Gastrocnemius medialis (tissue), 4 donors: ENCODE measurements at regions of chrX and their contacts with region 1.

Region 1: DNA sequence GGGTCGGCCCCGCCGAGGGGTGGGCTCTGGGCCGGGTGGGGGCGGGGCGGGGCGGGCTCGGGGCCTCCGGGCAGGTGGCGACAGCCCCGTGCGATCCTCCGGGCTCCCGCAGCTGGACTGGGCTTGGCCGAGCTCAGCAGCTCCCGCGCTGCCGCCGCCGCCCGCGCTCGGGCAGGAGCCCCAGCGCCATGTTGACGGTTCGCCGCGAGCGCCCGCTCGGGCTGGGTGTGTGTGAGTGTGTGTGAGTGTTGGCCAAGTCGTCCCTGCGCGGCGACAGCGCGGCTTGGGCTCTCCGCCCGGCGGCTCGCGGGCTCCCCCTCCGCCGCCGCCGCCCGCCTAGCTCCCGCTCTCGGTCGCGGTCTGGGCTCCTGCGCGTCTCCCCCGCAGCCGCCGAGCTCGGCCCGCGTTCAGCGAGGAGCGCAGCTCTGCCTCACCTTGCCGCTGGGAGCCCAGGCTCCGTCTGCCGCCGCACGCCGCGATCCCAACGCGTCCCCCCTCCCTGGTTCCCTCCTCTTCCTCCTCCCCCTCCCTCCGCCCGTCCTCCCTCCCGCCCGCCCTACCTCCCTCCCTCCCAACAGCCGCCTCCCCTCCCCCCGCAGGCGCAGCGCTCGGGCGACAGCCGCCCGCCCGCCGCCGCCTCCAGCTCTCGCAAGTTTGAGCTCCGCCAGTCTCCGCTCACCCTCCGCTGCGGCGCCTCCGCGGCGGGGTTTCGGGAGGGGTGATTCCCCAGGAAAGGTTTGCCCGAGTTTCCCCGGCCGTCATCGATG is at the start of gene BCOR:
- DNase-seq: peak; percentile 61 to 71
- ATAC-seq: peak; percentile 50 to 51
- H3K4me3 ChIP-seq: peak within 1 kb of the TSS; percentile 64 to 94 (median 82)
- H3K27ac ChIP-seq: peak within 1 kb of the TSS; percentile 88 to 93 (median 91)
- H3K4me1 ChIP-seq: peaks cover 3 to 13% of the 10 kb centered on the region in 2 donors
- H3K27me3 ChIP-seq: peaks cover 0 to 27% (median 16%) of the 10 kb centered on the region in 3 donors
- CTCF ChIP-seq: no peak
- POLR2A ChIP-seq: peak; percentile 85 to 88
- total RNA-seq, gene BCOR: 6.5 to 43.8 (median 18.4) TPM

Region 2: GRCh38 chrX:39814391-39814790 is 283.3 kb before region 1 on chrX:
- in situ Hi-C with region 1: no loop called
- intact Hi-C with region 1: loop called (anchors 10 kb)
- DNase-seq: no peak
- ATAC-seq: peak; percentile 25 to 40
- H3K4me3 ChIP-seq: no peak overlapping the region
- H3K27ac ChIP-seq: peak overlapping the region; percentile 52 to 74 (median 71)
- H3K4me1 ChIP-seq: peaks cover 5 to 6% of the 10 kb centered on the region in 2 donors
- H3K27me3 ChIP-seq: peaks cover 0 to 3% (median 0%) of the 10 kb centered on the region in 3 donors
- CTCF ChIP-seq: peak; percentile 23 to 55 (median 40)
- POLR2A ChIP-seq: no peak

Region 3: DNA sequence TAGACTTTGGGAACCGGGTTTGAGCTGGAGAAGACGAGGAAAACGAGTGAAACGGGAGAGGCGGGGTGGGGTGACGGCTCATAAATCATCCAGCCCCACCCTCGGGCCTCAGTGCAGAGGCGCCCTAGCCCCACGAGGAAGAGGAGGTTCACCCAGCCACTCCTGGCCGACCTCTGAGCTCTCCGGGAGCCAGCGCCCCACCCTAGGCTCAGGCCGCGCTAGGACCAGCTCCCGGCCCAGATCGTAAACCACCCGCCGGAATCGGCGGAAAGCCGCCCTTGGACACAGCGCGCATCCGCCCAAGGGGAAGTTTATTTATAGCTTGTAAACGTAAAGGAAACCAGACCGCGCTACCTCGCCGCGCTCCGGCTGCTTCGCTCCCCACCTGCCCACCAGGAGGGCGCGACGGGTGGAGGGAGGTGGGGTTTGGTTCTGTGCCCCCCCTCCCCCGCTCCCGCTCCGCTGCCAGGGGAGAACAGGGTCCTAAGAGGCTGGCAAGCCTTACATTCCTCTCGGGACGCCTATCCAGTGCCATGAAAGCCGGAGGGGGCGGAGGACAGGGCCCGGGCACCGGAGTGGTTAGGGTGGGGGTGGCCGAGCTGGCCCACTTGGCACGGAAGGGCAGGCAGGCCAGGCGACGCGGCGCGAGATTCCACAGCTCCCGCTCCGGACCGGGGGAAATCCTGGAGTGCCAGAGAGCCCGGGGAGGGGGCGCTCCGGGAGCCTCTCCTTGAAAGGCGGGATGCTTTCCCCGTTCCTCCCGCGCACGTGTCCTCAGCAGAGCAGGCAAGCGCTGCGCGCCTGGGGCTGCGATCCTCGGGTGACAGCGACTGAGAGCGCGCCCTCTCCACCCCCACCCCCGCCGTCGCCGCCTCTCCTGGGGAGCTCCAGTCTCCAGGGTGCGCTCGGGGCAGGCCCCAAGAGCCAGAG is 84.1 kb before region 1 on chrX:
- in situ Hi-C with region 1: no loop called
- intact Hi-C with region 1: loop called (anchors 2 kb)
- DNase-seq: peak; percentile 49 to 67
- ATAC-seq: peak; percentile 59 to 60
- H3K4me3 ChIP-seq: peak overlapping the region; percentile 61 to 79 (median 70)
- H3K27ac ChIP-seq: peak overlapping the region; percentile 92 to 95 (median 94)
- H3K4me1 ChIP-seq: peaks cover 0 to 7% of the 10 kb centered on the region in 2 donors
- H3K27me3 ChIP-seq: peaks cover 0 to 8% (median 7%) of the 10 kb centered on the region in 3 donors
- CTCF ChIP-seq: no peak
- POLR2A ChIP-seq: peak; percentile 69 to 77

Region 4: DNA sequence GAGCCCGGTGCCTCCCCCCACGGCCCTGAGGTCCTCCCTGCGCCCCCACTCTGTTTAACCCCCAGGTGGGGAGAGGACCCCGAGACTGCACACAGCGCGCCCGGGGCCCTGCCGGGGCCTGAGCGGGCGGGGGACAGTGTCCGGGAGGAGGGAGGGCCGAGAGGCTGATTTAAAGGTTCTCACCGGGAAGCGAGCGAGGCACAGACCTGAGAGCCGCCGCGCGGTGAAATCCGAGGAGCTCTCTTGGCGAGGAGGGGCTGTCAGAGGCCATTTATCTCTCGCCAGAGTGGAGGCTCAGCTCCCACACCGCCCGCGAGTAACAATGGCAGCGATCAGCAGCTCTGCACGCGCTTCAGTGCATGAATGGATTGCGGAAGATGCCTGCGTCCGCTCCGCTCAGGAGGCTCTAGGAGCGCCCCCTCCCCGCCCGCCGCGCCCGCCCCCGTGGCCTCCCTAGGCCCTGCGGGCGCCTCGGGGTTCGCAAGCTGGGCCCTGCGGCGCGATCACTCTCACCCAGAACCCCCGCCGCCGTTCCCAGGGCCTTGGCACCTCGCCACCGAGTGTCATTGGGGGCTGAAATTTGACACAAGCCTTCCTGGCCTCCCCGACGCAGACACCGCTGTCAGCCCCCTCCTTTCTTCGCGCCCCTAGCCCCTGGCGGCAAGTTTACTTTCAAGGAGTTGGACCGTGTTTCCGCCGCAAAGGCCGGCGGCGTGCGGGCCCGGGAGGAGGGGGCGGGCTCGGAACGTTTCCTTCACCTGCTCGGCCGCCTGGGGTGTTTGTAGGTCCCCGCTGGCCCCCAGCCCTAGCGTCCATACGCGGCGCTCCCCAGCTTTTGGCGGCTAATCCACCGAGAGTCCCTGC is 48.8 kb after region 1 on chrX:
- in situ Hi-C with region 1: loop called in 1 of 4 experiments (anchors 10 kb)
- intact Hi-C with region 1: no loop called
- DNase-seq: peak in 1 of 2 donors; percentile 39
- ATAC-seq: peak; percentile 80 to 85
- H3K4me3 ChIP-seq: peak overlapping the region; percentile 55 to 66 (median 58)
- H3K27ac ChIP-seq: peak overlapping the region; percentile 43 to 65 (median 54)
- H3K4me1 ChIP-seq: peaks cover 0 to 11% of the 10 kb centered on the region in 2 donors
- H3K27me3 ChIP-seq: peaks cover 0 to 24% (median 23%) of the 10 kb centered on the region in 3 donors
- CTCF ChIP-seq: no peak
- POLR2A ChIP-seq: peak; percentile 38 to 60

Region 5: DNA sequence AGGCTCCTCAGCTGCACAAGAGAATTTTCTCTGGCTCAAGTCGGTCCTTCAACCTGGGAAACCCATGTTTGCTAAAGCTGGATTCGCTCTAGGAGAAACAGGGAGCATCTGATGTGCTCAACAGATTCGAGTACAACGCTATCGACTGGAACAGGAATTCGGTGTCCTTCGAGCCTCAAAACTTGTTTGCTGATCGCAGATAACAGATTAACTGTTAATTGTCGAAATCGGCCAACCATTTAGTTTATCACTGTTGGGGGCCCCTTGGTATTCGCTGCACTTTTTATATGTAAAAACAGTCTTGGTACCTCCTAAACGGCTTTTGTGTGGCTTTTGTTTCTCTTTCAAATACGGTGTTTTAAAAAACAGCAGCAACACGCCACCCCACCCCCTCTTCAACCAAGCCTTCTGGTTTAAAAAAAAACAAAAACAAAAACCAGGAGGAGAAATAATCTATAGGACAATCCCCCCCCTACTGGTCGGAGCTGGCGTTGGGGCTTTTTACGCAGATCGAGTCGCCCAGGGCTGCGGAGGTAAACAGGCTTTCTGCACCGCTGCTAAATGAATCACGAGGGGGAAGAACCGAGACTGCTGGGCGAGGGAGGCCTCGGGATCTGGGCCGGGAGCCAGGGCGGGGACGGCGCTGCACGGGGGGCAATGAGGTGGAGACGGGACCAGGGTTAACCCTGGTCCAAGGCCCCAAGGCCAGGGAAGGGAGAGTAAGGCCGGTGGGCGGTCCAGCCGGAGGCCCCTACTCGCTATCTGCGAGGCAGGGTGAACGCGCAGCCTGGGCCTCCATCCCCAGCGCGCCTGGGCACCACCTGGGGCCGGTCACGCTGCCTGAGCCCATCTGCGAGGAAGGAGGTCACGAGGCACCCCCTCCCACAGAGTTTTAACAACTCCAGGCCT is 71.8 kb after region 1 on chrX:
- in situ Hi-C with region 1: no loop called
- intact Hi-C with region 1: loop called (anchors 5 kb)
- DNase-seq: no peak
- ATAC-seq: no peak
- H3K4me3 ChIP-seq: peak overlapping the region in 1 of 4 donors; percentile 2
- H3K27ac ChIP-seq: no peak overlapping the region
- H3K4me1 ChIP-seq: peaks cover 2 to 19% of the 10 kb centered on the region in 2 donors
- H3K27me3 ChIP-seq: peaks cover 0 to 55% (median 29%) of the 10 kb centered on the region in 3 donors
- CTCF ChIP-seq: peak in 1 of 5 experiments; percentile 31
- POLR2A ChIP-seq: no peak